CD14-positive monocyte (primary cell): ENCODE measurements at regions of chr1 and their contacts with region 1.

Region 1: GRCh38 chr1:2586154-2587070 is at the start of gene PRXL2B:
- DNase-seq: peak; percentile 97 to 100 (median 99)
- H3K4me3 ChIP-seq: peak within 1 kb of the TSS; percentile 58 to 78 (median 67)
- H3K4me3 Mint-ChIP-seq: peak within 1 kb of the TSS; percentile 79 to 88
- H3K27ac ChIP-seq: peak within 1 kb of the TSS; percentile 92 to 96
- H3K27ac Mint-ChIP-seq: peak within 1 kb of the TSS; percentile 93 to 97 (median 96)
- H3K4me1 ChIP-seq: peaks cover 47 to 52% of the 10 kb centered on the region in 2 donors
- H3K4me1 Mint-ChIP-seq: peaks cover 39% of the 10 kb centered on the region
- H3K27me3 ChIP-seq: peaks cover 0 to 8% of the 10 kb centered on the region in 2 donors
- H3K27me3 Mint-ChIP-seq: peaks cover 7 to 20% (median 9%) of the 10 kb centered on the region in 3 donors
- CTCF ChIP-seq: no peak
- polyA plus RNA-seq, gene PRXL2B: 3.6 to 8.8 (median 6.0) TPM

Region 2: GRCh38 chr1:2194898-2195673 is 391.3 kb before region 1 on chr1:
- intact Hi-C with region 1: loop called in 1 of 2 experiments (anchors 5 kb)
- DNase-seq: peak; percentile 77 to 85 (median 84)
- H3K4me3 ChIP-seq: peak overlapping the region; percentile 54 to 92 (median 61)
- H3K4me3 Mint-ChIP-seq: peak overlapping the region; percentile 78 to 84
- H3K27ac ChIP-seq: peak overlapping the region; percentile 69 to 89
- H3K27ac Mint-ChIP-seq: peak overlapping the region; percentile 76 to 95 (median 90)
- H3K4me1 ChIP-seq: peaks cover 39 to 47% of the 10 kb centered on the region in 2 donors
- H3K4me1 Mint-ChIP-seq: peaks cover 28% of the 10 kb centered on the region
- H3K27me3 ChIP-seq: no peaks in the 10 kb centered on the region
- H3K27me3 Mint-ChIP-seq: peaks cover 0 to 3% (median 1%) of the 10 kb centered on the region in 3 donors
- CTCF ChIP-seq: peak; percentile 99

Region 3: DNA sequence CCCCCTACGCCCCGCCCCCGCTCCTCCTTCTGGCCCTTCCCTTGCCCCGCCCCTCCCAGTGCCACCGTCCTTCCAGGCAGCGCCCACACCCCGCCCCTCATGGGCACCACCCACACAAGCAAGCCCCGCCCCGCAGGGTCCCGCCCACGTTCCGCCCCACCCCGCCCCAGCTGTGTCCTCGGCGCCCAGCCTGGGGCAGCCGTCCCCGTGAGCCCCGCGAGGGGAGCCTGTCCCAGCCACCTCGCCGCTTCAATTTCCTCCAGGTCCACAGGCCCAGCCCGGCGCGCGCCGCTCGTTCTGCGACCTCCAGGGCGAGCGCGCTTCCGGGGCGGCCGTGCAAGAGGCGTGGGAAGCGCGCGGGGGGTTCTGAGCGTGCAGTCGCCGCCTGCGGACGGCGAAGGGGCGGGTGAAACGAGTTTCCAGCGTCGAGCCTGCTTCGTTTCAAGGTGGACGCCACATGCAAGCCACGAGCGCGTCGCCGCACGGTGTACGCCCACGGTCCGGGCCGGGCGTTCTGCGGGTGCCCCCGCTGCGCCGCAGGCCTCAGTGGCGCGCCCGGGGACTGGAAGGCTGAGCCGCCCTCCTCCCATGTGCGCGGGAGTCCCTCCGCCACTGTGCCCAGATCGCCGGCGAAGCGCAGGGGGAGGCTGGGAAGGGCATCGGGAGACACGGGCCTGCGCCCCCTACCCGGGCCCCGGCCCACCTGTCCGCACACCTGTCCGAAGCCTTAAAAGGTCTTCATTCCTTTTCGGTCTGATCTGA is 381.0 kb before region 1 on chr1:
- intact Hi-C with region 1: loop called in 1 of 2 experiments (anchors 2 kb)
- DNase-seq: peak; percentile 88 to 96 (median 93)
- H3K4me3 ChIP-seq: peak overlapping the region; percentile 18 to 74 (median 36)
- H3K4me3 Mint-ChIP-seq: peak overlapping the region; percentile 59 to 76
- H3K27ac ChIP-seq: no peak overlapping the region
- H3K27ac Mint-ChIP-seq: no peak overlapping the region
- H3K4me1 ChIP-seq: peaks cover 12 to 19% of the 10 kb centered on the region in 2 donors
- H3K4me1 Mint-ChIP-seq: peaks cover 9% of the 10 kb centered on the region
- H3K27me3 ChIP-seq: peaks cover 0 to 9% of the 10 kb centered on the region in 2 donors
- H3K27me3 Mint-ChIP-seq: peaks cover 18 to 37% (median 23%) of the 10 kb centered on the region in 3 donors
- CTCF ChIP-seq: no peak

Region 4: GRCh38 chr1:2391041-2391930 is 195.1 kb before region 1 on chr1 and contains the starts of genes MORN1 and RER1:
- intact Hi-C with region 1: loop called in 1 of 2 experiments (anchors 5 kb)
- DNase-seq: peak; percentile 99 to 100 (median 99)
- H3K4me3 ChIP-seq: peak within 1 kb of the TSS; percentile 50 to 94 (median 78)
- H3K4me3 Mint-ChIP-seq: peak within 1 kb of the TSS; percentile 81 to 90
- H3K27ac ChIP-seq: peak within 1 kb of the TSS in 1 of 2 donors; percentile 79
- H3K27ac Mint-ChIP-seq: peak within 1 kb of the TSS; percentile 57 to 89 (median 85)
- H3K4me1 ChIP-seq: peaks cover 14 to 26% of the 10 kb centered on the region in 2 donors
- H3K4me1 Mint-ChIP-seq: peaks cover 30% of the 10 kb centered on the region
- H3K27me3 ChIP-seq: no peaks in the 10 kb centered on the region
- H3K27me3 Mint-ChIP-seq: no peaks in the 10 kb centered on the region
- CTCF ChIP-seq: no peak
- polyA plus RNA-seq, gene MORN1: 1.5 to 3.0 (median 1.7) TPM
- polyA plus RNA-seq, gene RER1: 98.3 to 235 (median 193) TPM

Region 5: GRCh38 chr1:2525920-2526823 is 60.2 kb before region 1 on chr1 and contains the start of gene PANK4:
- intact Hi-C with region 1: loop called (anchors 1 to 5 kb)
- DNase-seq: peak; percentile 89
- H3K4me3 ChIP-seq: peak within 1 kb of the TSS; percentile 64 to 91 (median 67)
- H3K4me3 Mint-ChIP-seq: peak within 1 kb of the TSS; percentile 88 to 92
- H3K27ac ChIP-seq: peak within 1 kb of the TSS; percentile 34 to 74
- H3K27ac Mint-ChIP-seq: peak within 1 kb of the TSS; percentile 64 to 98 (median 94)
- H3K4me1 ChIP-seq: peaks cover 31 to 42% of the 10 kb centered on the region in 2 donors
- H3K4me1 Mint-ChIP-seq: peaks cover 31% of the 10 kb centered on the region
- H3K27me3 ChIP-seq: peaks cover 25 to 37% of the 10 kb centered on the region in 2 donors
- H3K27me3 Mint-ChIP-seq: peaks cover 27 to 45% (median 37%) of the 10 kb centered on the region in 3 donors
- CTCF ChIP-seq: no peak
- polyA plus RNA-seq, gene PANK4: 11.9 to 30.2 (median 13.7) TPM

Region 6: DNA sequence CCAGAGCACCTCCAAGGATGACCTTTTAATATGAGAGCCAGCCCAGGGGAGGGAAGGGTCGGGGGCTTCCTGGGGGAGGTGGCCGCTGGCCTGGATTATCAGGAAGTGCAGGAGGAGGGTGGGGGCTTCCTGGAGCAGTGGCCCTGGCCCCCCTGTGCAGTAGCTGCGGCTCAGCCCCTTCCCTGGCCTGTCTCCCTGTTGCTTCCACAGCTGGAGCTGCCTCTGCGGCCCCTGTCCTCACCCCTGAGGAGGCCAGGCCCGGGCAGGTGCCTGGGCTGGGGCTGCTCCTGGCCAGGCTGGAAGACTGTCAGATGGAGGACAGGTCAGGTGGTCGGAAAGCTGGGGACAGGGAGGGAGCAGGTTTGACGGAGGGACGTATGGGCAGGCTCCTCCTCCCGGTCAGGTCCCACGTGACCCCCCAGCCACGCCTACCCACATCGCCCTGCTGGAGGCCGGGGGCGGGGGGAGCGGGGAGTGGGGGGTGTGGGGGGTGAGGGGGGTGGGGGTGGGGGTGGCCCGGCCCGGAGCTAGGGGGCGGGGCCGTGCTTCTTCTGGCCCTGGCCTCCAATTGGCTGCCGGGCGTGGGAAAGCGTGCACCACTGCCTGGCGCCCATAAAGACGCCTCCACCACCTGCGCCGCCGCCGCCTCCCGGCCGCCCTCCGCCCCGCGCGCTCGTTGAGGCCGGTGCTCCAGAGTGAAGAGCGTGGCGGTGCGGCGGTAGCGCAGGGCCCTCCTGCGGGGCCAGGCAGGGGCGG is 40.5 kb before region 1 on chr1:
- intact Hi-C with region 1: loop called (anchors 1 to 2 kb)
- DNase-seq: peak; percentile 88 to 93 (median 91)
- H3K4me3 ChIP-seq: peak overlapping the region; percentile 52 to 88 (median 76)
- H3K4me3 Mint-ChIP-seq: peak overlapping the region; percentile 76 to 81
- H3K27ac ChIP-seq: peak overlapping the region; percentile 99 to 100
- H3K27ac Mint-ChIP-seq: peak overlapping the region in 6 of 7 donors; percentile 54 to 99 (median 96)
- H3K4me1 ChIP-seq: peaks cover 40 to 52% of the 10 kb centered on the region in 2 donors
- H3K4me1 Mint-ChIP-seq: peaks cover 28% of the 10 kb centered on the region
- H3K27me3 ChIP-seq: peaks cover 0 to 21% of the 10 kb centered on the region in 2 donors
- H3K27me3 Mint-ChIP-seq: peaks cover 13 to 38% (median 21%) of the 10 kb centered on the region in 3 donors
- CTCF ChIP-seq: no peak

Region 7: GRCh38 chr1:2642560-2643413 is 56.4 kb after region 1 on chr1:
- intact Hi-C with region 1: loop called (anchors 5 kb)
- DNase-seq: peak; percentile 79 to 89 (median 84)
- H3K4me3 ChIP-seq: peak overlapping the region; percentile 54 to 86 (median 56)
- H3K4me3 Mint-ChIP-seq: peak overlapping the region; percentile 80 to 91
- H3K27ac ChIP-seq: peak overlapping the region in 1 of 2 donors; percentile 88
- H3K27ac Mint-ChIP-seq: peak overlapping the region in 4 of 7 donors; percentile 8 to 67 (median 55)
- H3K4me1 ChIP-seq: peaks cover 14 to 21% of the 10 kb centered on the region in 2 donors
- H3K4me1 Mint-ChIP-seq: peaks cover 8% of the 10 kb centered on the region
- H3K27me3 ChIP-seq: peaks cover 0 to 4% of the 10 kb centered on the region in 2 donors
- H3K27me3 Mint-ChIP-seq: peaks cover 5 to 20% (median 7%) of the 10 kb centered on the region in 3 donors
- CTCF ChIP-seq: no peak